ENCODE measurements at regions of chr22 and their contacts with region 1.

Region 1: GRCh38 chr22:38872172-38872830 is at the start of gene CBX6:
- DNase-seq: peak; percentile 98
- total RNA-seq, gene CBX6: 60.3 TPM

Region 2: DNA sequence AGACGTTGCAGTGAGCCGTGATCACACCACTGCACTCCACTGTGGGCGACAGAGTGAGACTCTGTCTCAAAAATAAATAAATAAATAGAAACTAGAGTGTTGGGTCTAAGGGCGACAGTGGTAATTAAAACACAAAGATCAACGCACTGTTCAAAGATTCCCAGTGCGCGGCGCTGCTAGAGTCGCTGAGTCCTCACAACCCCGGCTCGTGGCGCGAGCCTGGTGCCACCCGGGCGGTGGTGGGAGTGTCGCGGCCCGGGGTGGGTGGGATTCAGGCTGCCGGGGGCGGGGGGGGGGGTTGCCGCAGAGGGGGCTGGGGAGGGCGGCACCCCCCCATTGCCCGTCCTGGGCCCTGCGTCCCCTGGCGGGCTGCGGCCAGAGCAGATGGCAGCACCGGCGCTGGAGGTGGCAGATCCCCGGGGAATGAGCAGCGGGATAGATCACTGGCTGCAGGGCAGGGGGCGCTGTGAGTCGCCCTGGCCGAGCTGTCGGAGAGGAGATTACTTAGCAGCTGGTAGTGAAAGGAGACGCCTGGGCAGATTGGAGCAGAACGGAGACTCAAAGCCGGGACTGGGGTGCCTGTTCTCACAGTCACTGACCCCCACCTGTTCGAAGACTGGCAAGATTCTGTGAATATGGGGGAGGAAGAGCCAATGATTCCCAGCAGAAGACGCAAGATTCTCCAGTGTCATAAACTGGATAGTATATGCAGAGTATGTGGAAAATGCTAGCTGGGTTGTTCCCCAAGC is 54.9 kb after region 1 on chr22:
- intact Hi-C with region 1: loop called (anchors 1 kb)
- DNase-seq: peak; percentile 93

Region 3: DNA sequence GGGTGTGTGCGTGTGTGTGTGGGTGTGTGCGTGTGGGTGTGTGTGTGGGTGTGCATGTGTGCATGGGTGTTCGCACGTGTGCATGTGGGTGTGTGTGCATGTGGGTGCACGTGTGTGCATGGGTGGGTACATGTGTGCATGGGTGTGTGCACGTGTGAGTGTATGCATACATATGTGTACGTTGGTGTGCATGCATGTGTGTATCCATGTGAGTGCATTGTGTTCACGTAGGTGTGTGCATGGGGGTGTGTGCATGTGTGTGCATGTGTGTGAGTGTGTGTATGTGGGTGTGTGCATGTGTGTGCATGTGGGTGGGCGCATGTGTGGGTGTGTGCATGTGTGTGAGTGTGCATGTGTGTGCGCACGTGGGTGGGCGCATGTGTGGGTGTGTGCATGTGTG is 65.2 kb after region 1 on chr22:
- intact Hi-C with region 1: no loop called
- DNase-seq: peak; percentile 9

Region 4: DNA sequence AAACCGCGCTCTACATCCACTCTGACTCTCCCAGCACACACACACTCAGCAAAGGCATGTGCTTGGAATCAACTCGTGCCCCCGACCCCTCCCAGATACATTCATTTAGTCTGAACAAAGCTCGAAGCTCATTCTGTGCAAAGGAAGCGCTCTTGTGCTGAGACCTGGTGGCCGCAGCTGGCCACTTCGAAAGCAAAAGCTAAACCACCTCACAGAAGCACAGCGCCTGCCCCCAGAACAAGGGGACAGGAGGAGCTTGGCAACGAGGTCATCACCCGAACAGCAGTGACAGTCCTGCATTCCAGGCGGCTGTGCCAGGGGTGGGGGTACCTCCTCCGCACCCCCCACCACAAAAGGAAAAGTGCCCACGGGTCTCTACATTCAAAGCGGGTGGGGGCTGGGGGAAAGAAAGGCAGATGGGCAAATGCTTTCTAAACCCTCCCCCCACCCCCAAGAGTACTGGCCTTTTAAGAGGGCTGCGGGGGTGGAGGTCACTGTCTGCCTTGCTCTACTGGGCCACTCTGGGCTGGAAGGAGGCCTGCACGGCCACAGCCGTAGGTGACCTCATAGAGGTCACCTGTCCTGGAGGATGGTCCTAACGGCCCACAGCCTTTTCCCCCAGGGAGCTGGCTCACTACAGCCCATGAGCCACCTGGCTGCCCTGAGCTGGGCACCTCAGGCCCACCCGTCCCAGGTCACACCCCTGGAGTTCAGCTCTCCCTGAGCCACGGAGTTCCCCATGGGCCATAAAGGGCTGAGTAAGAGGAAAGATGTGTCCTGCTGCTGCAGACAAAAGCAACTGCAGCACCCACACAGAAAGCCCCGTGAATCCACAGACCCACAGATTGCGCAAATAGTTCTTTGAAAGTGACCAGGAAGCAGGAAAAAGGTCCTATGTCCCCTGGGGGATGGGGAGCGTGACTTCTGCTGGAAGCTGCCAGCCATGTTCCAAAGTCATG is 258.9 kb after region 1 on chr22:
- intact Hi-C with region 1: loop called (anchors 5 kb)
- DNase-seq: no peak

Region 5: DNA sequence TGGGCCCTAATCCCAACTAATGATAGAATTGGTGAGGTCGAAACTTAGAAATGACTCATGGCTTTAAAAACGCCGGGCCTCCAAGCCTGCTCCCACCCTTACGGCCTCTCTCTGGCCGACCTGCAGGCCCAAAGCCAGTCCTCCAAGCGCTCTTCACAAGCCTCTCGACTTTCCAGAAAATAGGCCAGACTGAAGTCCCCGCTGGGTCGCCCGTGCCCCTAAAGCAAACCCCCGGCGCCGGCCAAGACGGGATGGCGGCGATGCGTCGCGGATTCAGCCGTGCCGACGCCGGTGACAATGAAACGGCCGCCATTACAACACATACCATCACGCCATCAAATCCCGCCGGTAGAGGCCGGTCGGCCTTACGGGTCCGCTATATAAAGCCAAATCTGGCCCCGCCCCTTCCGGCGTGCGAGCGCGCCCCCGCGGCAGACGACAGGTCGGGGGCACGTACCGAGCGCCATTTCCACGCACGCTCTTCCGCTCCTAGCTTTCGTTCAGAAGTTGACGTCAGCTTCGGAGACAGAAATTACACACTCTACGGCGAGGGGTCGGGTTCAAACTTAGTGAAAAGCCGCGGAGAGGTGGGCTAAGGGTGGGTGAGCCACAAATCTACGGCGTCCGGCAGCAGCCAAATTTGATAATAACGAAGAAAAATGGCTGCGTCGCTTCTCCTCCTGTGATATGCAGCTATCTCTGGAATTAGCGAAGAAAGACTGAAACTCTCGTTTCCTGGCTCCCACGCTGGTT is 447.1 kb after region 1 on chr22 and contains the start of gene RPL3:
- intact Hi-C with region 1: loop called (anchors 2 kb)
- DNase-seq: peak; percentile 98
- total RNA-seq, gene RPL3: 317 TPM